Panc1 (cell line): ENCODE measurements at regions of chr15 and their contacts with region 1.

Region 1: DNA sequence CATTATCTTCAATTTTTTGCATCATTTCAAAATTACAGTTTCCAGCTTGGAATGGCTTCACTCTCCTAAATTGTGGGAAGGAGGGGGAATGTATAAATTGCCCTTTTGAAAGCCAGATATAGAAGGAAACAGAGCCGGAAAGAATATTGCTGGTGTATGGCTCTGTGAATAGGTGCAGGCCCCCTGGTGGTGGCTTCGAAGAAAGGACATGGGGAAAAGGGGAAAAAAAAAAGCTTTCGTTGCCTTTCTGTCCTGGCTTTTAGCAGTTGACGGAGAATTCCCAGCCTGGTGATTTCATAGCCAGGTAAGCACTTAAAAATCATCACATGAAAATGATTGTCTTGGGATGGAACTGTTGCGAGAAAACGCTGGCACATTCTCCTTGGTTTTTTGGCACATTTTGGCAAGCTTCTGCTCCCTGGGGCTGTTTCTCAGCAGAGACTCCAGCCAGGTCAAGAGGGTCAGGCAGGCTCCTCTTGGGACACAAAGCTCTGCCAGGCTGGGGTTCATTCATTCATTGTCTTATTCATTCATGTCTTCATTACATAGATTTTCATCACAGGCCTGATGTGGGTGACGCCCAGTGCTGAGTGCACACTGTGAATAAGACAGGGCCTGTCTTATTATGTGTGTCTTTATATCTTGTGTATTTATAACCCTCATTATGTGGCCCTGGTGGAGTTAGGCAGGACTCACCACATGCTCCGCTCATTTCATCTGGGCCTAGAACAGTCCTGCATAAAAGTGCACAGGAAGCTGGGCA is 300.0 kb upstream of the TPM1 start:
- DNase-seq: peak; percentile 59
- ATAC-seq: peak; percentile 82
- H3K4me3 ChIP-seq: peak overlapping the region in 1 of 2 experiments; percentile 30; a peak in 2 of 4 replicates
- H3K27ac ChIP-seq: no peak overlapping the region
- H3K4me1 ChIP-seq: peaks cover 7% of the 10 kb centered on the region; the same call in 1 of the 2 replicates
- H3K27me3 ChIP-seq: no peaks in the 10 kb centered on the region
- CTCF ChIP-seq: peak; percentile 94

Region 2: DNA sequence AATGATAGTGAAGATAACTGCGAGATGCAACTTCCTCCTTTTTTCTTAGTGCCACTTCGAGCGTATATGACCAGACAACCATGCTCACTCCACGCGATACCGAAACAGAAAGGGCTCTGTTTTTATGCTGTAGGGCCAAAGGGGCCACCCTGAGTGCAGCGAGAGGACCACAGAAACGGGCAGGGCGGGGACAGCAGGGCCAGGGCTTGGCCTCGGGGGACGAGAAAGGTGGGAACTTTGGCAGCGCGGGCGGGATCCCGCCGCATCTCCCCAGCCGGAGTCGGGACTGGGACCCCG is 682.8 kb before region 1 on chr15:
- CTCF ChIA-PET with region 1: interaction called, 12 read pairs
- POLR2A ChIA-PET with region 1: no interaction called
- in situ Hi-C with region 1: no loop called
- intact Hi-C with region 1: no loop called
- DNase-seq: no peak
- ATAC-seq: peak; percentile 78
- H3K4me3 ChIP-seq: peak overlapping the region; percentile 77 to 97
- H3K27ac ChIP-seq: peak overlapping the region; percentile 89
- H3K4me1 ChIP-seq: peaks cover 7% of the 10 kb centered on the region
- H3K27me3 ChIP-seq: peaks cover 27% of the 10 kb centered on the region
- CTCF ChIP-seq: no peak

Region 3: DNA sequence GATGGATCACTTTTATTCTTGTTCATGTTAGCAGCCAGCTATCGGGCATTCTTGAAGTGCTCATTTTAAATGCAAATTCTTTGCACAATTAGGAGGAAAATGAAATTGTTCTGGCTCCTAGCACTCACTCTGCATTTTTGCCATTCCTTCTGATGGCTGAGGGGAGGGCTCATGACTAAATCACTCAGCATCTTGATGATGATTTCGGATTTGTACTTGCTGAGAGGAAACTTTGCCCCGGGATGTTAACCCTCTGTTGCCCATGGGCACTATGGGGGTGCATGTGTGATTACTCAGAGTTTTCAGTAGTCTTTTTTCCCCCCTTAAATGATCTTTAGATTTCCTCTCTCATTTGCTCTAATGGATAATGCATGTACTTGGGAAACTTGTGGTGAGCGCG is 277.9 kb before region 1 on chr15:
- CTCF ChIA-PET with region 1: interaction called, 13 read pairs
- POLR2A ChIA-PET with region 1: no interaction called
- in situ Hi-C with region 1: no loop called
- intact Hi-C with region 1: no loop called
- DNase-seq: no peak
- ATAC-seq: no peak
- H3K4me3 ChIP-seq: no peak overlapping the region
- H3K27ac ChIP-seq: no peak overlapping the region
- H3K4me1 ChIP-seq: no peaks in the 10 kb centered on the region
- H3K27me3 ChIP-seq: no peaks in the 10 kb centered on the region
- CTCF ChIP-seq: no peak

Region 4: DNA sequence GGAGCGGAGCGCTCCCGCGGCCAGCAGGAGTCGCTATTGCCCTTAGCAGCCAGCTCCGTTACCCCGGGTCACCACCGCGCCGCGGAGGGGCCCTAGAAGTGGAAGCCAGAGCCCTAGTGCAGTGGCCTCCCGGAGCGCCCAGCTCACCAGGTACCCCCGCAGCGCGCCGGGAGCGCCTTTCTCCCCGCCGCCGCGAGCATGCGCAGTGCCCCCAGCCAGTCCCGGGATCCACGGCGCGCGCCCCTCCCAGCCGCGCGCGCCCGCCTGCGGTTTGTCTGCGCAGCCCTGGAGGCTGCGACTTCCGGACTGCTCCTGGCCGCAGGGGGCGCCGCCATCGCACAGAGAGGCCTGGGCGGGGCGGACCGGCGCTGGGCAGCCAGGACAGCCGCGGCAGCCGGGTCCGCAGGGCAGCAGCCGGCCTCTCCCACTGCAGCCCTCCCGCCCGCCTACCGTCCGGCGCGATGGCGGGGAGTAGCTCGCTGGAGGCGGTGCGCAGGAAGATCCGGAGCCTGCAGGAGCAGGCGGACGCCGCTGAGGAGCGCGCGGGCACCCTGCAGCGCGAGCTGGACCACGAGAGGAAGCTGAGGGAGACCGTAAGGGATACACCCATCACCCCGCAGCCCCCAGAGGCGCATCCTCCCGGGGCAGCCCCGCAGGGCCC is 305.7 kb after region 1 on chr15:
- CTCF ChIA-PET with region 1: interaction called, 13 read pairs
- POLR2A ChIA-PET with region 1: no interaction called
- in situ Hi-C with region 1: no loop called
- intact Hi-C with region 1: no loop called
- DNase-seq: peak; percentile 87
- ATAC-seq: peak; percentile 84
- H3K4me3 ChIP-seq: peak overlapping the region; percentile 80 to 90
- H3K27ac ChIP-seq: peak overlapping the region; percentile 85
- H3K4me1 ChIP-seq: peaks cover 77% of the 10 kb centered on the region
- H3K27me3 ChIP-seq: no peaks in the 10 kb centered on the region
- CTCF ChIP-seq: peak; percentile 98

Region 5: GRCh38 chr15:63118854-63119253 is 376.3 kb after region 1 on chr15:
- CTCF ChIA-PET with region 1: interaction called, 11 read pairs
- POLR2A ChIA-PET with region 1: no interaction called
- in situ Hi-C with region 1: no loop called
- intact Hi-C with region 1: no loop called
- DNase-seq: no peak
- ATAC-seq: no peak
- H3K4me3 ChIP-seq: no peak overlapping the region
- H3K27ac ChIP-seq: no peak overlapping the region
- H3K4me1 ChIP-seq: peaks cover 8% of the 10 kb centered on the region
- H3K27me3 ChIP-seq: no peaks in the 10 kb centered on the region
- CTCF ChIP-seq: no peak